CD4-positive, alpha-beta memory T cell (primary cell): ENCODE measurements at regions of chr9 and their contacts with region 1.

Region 1: DNA sequence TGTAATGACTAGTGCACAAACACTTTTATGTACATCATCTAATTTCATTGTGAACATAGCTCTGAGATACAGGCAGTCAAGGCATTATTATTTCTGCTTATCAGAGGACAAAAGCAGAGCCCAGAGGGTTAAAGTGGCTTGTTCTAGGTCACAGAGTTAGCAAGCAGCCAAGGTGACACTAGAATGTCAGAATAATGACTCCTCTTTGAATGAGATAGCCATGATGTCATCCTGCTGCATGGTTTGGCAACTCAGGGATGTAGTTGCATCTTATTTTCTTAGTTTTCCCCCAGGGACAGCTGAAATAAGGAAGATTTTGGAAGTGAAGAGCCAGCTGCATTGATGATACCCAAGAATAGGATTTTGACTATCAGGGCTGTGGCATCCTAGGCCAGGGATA is 54.4 kb downstream of the KCNV2 start:
- DNase-seq: no peak
- H3K4me3 ChIP-seq: no peak overlapping the region
- H3K4me3 Mint-ChIP-seq: no peak overlapping the region
- H3K27ac ChIP-seq: no peak overlapping the region
- H3K27ac Mint-ChIP-seq: no peak overlapping the region
- H3K4me1 ChIP-seq: no peaks in the 10 kb centered on the region
- H3K4me1 Mint-ChIP-seq: peaks cover 0 to 4% (median 1%) of the 10 kb centered on the region in 4 donors
- H3K27me3 ChIP-seq: no peaks in the 10 kb centered on the region
- H3K27me3 Mint-ChIP-seq: no peaks in the 10 kb centered on the region

Region 2: DNA sequence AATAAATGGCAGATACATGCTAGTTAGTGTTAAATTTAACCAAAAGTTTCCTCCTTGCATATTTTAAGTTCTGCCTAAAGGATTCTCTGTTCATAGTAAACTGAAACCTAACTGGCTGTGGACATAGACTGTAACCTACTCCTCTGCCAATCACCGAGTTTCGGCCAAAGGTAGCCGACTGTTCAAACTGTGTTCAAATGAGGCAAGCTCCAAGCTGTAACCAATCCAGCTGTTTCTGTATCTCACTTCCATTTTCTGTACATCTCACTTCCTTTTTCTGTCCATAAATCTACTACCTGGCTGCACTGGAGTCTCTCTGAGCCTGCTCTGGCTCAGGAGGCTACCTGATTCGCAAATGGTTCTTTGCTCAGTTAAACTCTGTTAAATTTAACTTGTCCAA is 10.2 kb before region 1 on chr9:
- CTCF ChIA-PET with region 1: no interaction called
- POLR2A ChIA-PET with region 1: no interaction called
- intact Hi-C with region 1: no loop called
- DNase-seq: no peak
- H3K4me3 ChIP-seq: no peak overlapping the region
- H3K4me3 Mint-ChIP-seq: no peak overlapping the region
- H3K27ac ChIP-seq: no peak overlapping the region
- H3K27ac Mint-ChIP-seq: no peak overlapping the region
- H3K4me1 ChIP-seq: peaks cover 21% of the 10 kb centered on the region
- H3K4me1 Mint-ChIP-seq: peaks cover 16 to 30% (median 23%) of the 10 kb centered on the region in 4 donors
- H3K27me3 ChIP-seq: no peaks in the 10 kb centered on the region
- H3K27me3 Mint-ChIP-seq: no peaks in the 10 kb centered on the region

Region 3: DNA sequence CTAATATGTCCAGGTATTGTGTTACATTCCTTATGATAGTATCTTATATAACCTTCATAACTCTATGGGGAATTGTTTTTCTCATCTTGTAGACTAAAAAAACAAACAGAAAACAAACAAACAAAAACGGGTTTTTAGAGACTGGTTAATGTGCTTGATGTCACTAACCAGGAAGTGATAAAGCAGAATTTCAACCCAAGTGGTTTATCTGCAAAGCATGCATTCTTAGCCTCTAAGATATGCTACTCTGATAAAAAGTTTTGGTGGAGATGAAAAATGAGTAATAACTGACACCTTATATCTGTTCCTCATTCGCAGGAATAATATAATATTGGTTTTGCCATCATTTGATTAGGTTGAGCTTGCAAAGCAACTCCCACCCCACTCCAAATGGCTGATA is 18.8 kb after region 1 on chr9:
- CTCF ChIA-PET with region 1: no interaction called
- POLR2A ChIA-PET with region 1: no interaction called
- intact Hi-C with region 1: loop called (anchors 2 kb)
- DNase-seq: no peak
- H3K4me3 ChIP-seq: no peak overlapping the region
- H3K4me3 Mint-ChIP-seq: no peak overlapping the region
- H3K27ac ChIP-seq: no peak overlapping the region
- H3K27ac Mint-ChIP-seq: no peak overlapping the region
- H3K4me1 ChIP-seq: no peaks in the 10 kb centered on the region
- H3K4me1 Mint-ChIP-seq: no peaks in the 10 kb centered on the region
- H3K27me3 ChIP-seq: no peaks in the 10 kb centered on the region
- H3K27me3 Mint-ChIP-seq: no peaks in the 10 kb centered on the region

Region 4: GRCh38 chr9:2984491-2984890 is 212.8 kb after region 1 on chr9:
- CTCF ChIA-PET with region 1: no interaction called
- POLR2A ChIA-PET with region 1: no interaction called
- intact Hi-C with region 1: no loop called
- DNase-seq: no peak
- H3K4me3 ChIP-seq: no peak overlapping the region
- H3K4me3 Mint-ChIP-seq: no peak overlapping the region
- H3K27ac ChIP-seq: no peak overlapping the region
- H3K27ac Mint-ChIP-seq: no peak overlapping the region
- H3K4me1 ChIP-seq: no peaks in the 10 kb centered on the region
- H3K4me1 Mint-ChIP-seq: no peaks in the 10 kb centered on the region
- H3K27me3 ChIP-seq: no peaks in the 10 kb centered on the region
- H3K27me3 Mint-ChIP-seq: peaks cover 3 to 7% of the 10 kb centered on the region in 2 donors